ENCODE measurements at regions of chr18 and their contacts with region 1.

Region 1: DNA sequence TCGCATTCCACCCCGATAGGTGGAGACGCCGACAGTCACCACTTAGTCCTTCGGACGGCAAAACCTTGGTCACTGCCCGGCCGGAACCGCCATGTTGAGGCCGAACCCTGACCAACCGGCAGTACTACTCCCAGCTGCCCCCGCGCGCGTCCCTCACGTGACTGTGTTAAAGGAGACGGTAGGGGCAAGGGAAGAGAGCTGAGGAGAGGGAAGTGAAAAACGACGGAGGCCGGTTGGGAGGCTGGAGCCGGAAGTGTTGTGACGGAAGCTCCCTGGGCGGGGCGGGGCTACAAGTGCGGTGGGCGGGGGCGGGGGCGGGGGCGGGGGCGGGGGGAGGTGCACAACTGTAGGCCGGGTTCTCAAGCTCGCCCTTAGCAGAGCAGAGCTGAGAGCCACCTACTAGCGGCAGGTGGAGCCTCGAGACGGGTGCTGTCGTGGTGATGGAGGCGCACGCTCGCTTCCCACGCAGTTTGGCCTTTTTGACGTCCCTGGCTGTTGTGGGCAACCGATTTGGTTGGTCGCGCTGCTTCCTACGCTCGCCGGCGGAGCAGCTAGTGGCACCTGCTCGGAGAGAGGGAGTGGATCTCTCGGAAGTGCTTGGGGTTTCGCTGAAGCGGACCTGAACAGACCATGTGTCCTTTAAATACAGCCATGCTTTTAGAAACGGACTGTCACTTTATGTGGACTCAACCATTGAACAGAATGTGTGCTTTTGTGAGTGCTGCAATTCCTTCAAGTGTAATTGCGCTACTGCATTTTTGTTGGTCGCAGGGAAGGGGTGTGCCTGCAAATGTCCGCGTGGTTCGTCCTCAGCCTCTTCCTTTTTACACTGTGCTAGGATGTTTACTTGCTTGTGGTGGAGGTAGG is at the start of gene TRAPPC8:
- DNase-seq: peak; percentile 95
- ATAC-seq: peak; percentile 93
- H3K4me3 Mint-ChIP-seq: peak within 1 kb of the TSS; percentile 95
- H3K27ac Mint-ChIP-seq: peak within 1 kb of the TSS; percentile 98
- H3K4me1 Mint-ChIP-seq: peaks cover 43% of the 10 kb centered on the region
- H3K27me3 Mint-ChIP-seq: no peaks in the 10 kb centered on the region
- total RNA-seq, gene TRAPPC8: 41.5 to 42.1 TPM

Region 2: DNA sequence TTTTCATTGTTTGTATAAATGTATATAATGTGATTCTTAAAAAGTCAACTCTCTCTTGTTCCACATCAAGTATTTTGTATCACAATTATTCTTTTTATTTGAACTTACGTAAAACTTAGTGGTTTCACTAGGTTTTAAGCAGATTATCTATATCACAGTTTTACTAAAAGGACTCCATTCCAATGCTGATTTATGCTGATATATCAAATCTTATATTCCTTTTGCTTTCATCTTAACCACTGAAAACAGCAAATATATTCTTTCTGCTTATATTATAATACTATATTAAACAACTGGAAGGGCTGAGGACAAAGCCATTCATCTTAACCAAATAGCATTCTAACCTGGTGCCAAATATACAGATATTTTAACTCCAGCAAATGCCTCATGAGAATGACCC is 24.5 kb before region 1 on chr18:
- CTCF ChIA-PET with region 1: no interaction called
- POLR2A ChIA-PET with region 1: no interaction called
- DNase-seq: no peak
- ATAC-seq: no peak
- H3K4me3 Mint-ChIP-seq: no peak overlapping the region
- H3K27ac Mint-ChIP-seq: no peak overlapping the region
- H3K4me1 Mint-ChIP-seq: no peaks in the 10 kb centered on the region
- H3K27me3 Mint-ChIP-seq: no peaks in the 10 kb centered on the region

Region 3: GRCh38 chr18:32040936-32041335 is 97.7 kb after region 1 on chr18:
- CTCF ChIA-PET with region 1: interaction called, 10 read pairs
- POLR2A ChIA-PET with region 1: no interaction called
- DNase-seq: peak; percentile 82
- ATAC-seq: peak; percentile 90
- H3K4me3 Mint-ChIP-seq: peak overlapping the region; percentile 65
- H3K27ac Mint-ChIP-seq: peak overlapping the region; percentile 89
- H3K4me1 Mint-ChIP-seq: peaks cover 66% of the 10 kb centered on the region
- H3K27me3 Mint-ChIP-seq: no peaks in the 10 kb centered on the region

Region 4: DNA sequence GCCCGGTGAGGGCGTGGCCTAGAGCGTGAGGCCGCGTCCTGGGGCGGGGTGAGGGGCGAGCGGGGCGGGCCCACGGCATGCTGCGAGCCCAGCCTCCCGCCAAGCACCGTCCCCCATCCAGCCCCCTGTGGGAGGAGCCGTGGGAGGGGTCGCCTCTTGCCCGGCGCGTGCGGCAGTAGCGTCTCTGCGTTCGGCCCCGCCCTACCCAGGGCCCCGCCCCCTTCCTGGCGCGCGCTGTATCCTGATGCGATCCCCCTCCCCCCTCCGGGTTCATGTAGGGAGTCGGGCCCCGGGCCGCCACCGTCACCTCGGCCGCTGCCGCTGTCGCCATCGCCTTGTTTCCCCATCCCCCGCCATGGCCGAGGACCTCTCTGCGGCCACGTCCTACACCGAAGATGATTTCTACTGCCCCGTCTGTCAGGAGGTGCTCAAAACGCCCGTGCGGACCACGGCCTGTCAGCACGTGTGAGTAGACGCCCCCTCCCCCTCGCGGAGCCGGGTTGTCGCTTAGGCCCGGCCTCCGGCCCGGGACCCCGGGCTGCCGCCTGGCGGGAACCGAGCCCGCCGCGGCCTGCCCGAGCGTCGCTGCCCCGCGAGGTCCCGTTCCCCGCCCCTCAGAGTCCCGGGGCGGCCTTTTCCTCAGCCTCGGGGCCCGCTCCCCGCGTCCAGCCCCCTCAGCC is 149.3 kb after region 1 on chr18:
- CTCF ChIA-PET with region 1: interaction called, 6 read pairs
- POLR2A ChIA-PET with region 1: interaction called, 25 read pairs
- DNase-seq: peak; percentile 100
- ATAC-seq: peak; percentile 91
- H3K4me3 Mint-ChIP-seq: peak overlapping the region; percentile 96
- H3K27ac Mint-ChIP-seq: peak overlapping the region; percentile 98
- H3K4me1 Mint-ChIP-seq: peaks cover 50% of the 10 kb centered on the region
- H3K27me3 Mint-ChIP-seq: no peaks in the 10 kb centered on the region